WTC11 (cell line): ENCODE measurements at regions of chr16 and their contacts with region 1.

Region 1: GRCh38 chr16:22055878-22056277 is 36.5 kb upstream of the VWA3A start:
- DNase-seq: peak; percentile 73
- ATAC-seq: peak; percentile 96
- H3K4me3 Mint-ChIP-seq: no peak overlapping the region
- H3K27ac Mint-ChIP-seq: peak overlapping the region; percentile 22; the same call in 1 of the 2 replicates
- H3K4me1 Mint-ChIP-seq: peaks cover 5% of the 10 kb centered on the region; the same call in 1 of the 2 replicates
- H3K27me3 Mint-ChIP-seq: no peaks in the 10 kb centered on the region
- CTCF ChIP-seq: peak; percentile 47

Region 2: DNA sequence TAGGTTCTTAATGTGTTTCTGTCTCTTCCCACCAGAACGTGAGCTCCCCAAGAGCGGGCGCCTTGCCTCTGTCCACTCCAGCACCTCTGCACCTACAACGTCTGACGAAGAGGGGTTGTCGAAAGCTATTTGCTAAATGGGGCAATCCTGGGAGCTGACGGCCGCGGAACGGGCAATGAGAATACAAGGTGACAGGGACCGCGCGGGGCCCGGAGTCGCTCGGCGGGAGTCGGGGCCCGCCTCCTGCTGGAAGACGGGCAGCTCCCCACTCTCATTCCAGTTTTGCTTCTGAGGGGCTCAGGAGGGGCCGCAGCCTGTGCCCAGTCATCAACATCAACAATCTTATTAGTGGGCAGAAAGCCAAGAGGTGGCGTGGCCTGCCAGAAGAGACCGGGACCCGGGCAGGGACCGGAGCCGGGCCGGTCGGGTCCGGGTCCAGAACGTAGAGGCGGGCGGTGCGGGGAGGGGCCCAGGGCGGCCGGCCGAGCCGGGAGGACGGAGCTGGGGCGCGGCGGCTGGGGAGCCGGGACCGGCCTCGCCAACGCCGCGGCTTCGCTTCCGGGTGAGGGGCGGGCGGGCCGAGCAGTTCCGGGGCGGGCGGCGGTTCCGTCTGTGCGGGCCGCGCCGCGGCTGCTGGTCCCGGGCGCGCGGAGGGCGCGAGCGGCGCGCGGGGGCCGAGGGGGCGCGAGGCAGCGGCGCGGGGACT is 48.2 kb before region 1 on chr16 and contains the start of gene MOSMO:
- CTCF ChIA-PET with region 1: interaction called, 28 read pairs
- POLR2A ChIA-PET with region 1: interaction called, 6 read pairs
- DNase-seq: peak; percentile 66
- ATAC-seq: peak; percentile 82
- H3K4me3 Mint-ChIP-seq: peak within 1 kb of the TSS; percentile 90
- H3K27ac Mint-ChIP-seq: peak within 1 kb of the TSS; percentile 21; the same call in 1 of the 2 replicates
- H3K4me1 Mint-ChIP-seq: peaks cover 12% of the 10 kb centered on the region
- H3K27me3 Mint-ChIP-seq: peaks cover 13% of the 10 kb centered on the region
- CTCF ChIP-seq: no peak
- total RNA-seq, gene MOSMO: 10.7 to 11.6 TPM (median 10.7 TPM) in 3 replicates

Region 3: GRCh38 chr16:22035153-22035552 is 20.7 kb before region 1 on chr16:
- CTCF ChIA-PET with region 1: interaction called, 13 read pairs
- POLR2A ChIA-PET with region 1: interaction called, 3 read pairs
- DNase-seq: no peak
- ATAC-seq: peak; percentile 47
- H3K4me3 Mint-ChIP-seq: no peak overlapping the region
- H3K27ac Mint-ChIP-seq: peak overlapping the region; percentile 76; the same call in 1 of the 2 replicates
- H3K4me1 Mint-ChIP-seq: peaks cover 16% of the 10 kb centered on the region
- H3K27me3 Mint-ChIP-seq: no peaks in the 10 kb centered on the region
- CTCF ChIP-seq: no peak

Region 4: DNA sequence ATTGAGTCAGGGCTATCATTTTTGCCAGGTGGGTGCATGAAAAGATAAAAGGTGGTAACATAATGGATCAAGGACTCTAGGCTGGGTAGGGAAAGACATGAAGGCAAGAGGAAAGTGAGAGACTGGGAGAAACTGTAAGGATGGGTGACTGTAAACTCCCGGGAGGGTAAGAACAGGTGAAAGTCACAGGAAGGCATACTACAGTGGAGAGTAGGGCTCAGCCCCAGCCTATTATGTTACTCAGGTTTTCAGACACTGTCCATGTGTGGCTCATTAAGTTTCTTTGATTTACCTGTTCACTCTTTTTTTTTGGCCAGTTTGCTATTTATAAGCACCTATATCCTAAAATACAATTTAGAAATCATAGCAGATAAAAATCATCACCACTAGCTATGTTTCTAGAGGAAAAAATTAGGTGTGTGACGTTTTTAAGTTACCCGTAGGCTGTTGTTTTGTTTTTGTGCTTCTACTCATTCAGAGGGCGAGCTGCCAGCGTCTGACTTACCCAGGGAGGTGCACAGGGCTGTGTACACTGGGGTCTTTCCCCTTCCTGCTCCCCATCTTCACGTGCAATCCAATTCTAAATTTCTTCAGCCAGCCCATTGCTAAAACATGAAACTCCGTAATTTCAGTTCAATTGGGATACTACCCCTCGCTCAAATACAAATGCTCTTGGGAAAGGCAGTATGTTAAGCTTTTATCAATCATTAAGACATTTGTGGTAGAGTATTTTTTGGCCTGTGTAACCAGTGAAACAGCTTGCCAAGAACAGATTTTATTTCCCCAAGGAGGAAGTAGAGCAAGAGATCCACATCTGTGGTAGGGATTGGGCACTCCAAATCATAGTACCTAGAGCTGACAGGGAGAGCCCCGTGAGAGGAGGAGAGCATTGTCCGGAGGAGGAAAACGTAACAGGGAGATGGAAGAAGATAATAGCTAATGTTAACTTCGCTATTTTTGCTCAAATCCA is 14.8 kb after region 1 on chr16:
- CTCF ChIA-PET with region 1: interaction called, 23 read pairs
- POLR2A ChIA-PET with region 1: no interaction called
- DNase-seq: no peak
- ATAC-seq: no peak
- H3K4me3 Mint-ChIP-seq: no peak overlapping the region
- H3K27ac Mint-ChIP-seq: no peak overlapping the region
- H3K4me1 Mint-ChIP-seq: peaks cover 2% of the 10 kb centered on the region; the same call in 1 of the 2 replicates
- H3K27me3 Mint-ChIP-seq: no peaks in the 10 kb centered on the region
- CTCF ChIP-seq: no peak

Region 5: GRCh38 chr16:22109258-22109898 is 53.5 kb after region 1 on chr16:
- CTCF ChIA-PET with region 1: no interaction called
- POLR2A ChIA-PET with region 1: no interaction called
- DNase-seq: no peak
- ATAC-seq: no peak
- H3K4me3 Mint-ChIP-seq: no peak overlapping the region
- H3K27ac Mint-ChIP-seq: no peak overlapping the region
- H3K4me1 Mint-ChIP-seq: peaks cover 5% of the 10 kb centered on the region
- H3K27me3 Mint-ChIP-seq: peaks cover 7% of the 10 kb centered on the region; the same call in 1 of the 2 replicates
- CTCF ChIP-seq: no peak

Region 6: GRCh38 chr16:22132766-22133165 is 76.9 kb after region 1 on chr16:
- CTCF ChIA-PET with region 1: no interaction called
- POLR2A ChIA-PET with region 1: no interaction called
- DNase-seq: no peak
- ATAC-seq: no peak
- H3K4me3 Mint-ChIP-seq: no peak overlapping the region
- H3K27ac Mint-ChIP-seq: no peak overlapping the region
- H3K4me1 Mint-ChIP-seq: peaks cover 6% of the 10 kb centered on the region; the same call in 1 of the 2 replicates
- H3K27me3 Mint-ChIP-seq: peaks cover 8% of the 10 kb centered on the region
- CTCF ChIP-seq: no peak

Region 7: GRCh38 chr16:22300427-22301071 is 244.7 kb after region 1 on chr16:
- CTCF ChIA-PET with region 1: no interaction called
- POLR2A ChIA-PET with region 1: no interaction called
- DNase-seq: peak; percentile 57
- ATAC-seq: peak; percentile 14
- H3K4me3 Mint-ChIP-seq: peak overlapping the region; percentile 26; the same call in 1 of the 2 replicates
- H3K27ac Mint-ChIP-seq: peak overlapping the region; percentile 76
- H3K4me1 Mint-ChIP-seq: peaks cover 26% of the 10 kb centered on the region
- H3K27me3 Mint-ChIP-seq: no peaks in the 10 kb centered on the region
- CTCF ChIP-seq: peak; percentile 31; the same call in 1 of the 2 replicates